GM13976 (cell line): ENCODE measurements at regions of chrX and their contacts with region 1.

Region 1: DNA sequence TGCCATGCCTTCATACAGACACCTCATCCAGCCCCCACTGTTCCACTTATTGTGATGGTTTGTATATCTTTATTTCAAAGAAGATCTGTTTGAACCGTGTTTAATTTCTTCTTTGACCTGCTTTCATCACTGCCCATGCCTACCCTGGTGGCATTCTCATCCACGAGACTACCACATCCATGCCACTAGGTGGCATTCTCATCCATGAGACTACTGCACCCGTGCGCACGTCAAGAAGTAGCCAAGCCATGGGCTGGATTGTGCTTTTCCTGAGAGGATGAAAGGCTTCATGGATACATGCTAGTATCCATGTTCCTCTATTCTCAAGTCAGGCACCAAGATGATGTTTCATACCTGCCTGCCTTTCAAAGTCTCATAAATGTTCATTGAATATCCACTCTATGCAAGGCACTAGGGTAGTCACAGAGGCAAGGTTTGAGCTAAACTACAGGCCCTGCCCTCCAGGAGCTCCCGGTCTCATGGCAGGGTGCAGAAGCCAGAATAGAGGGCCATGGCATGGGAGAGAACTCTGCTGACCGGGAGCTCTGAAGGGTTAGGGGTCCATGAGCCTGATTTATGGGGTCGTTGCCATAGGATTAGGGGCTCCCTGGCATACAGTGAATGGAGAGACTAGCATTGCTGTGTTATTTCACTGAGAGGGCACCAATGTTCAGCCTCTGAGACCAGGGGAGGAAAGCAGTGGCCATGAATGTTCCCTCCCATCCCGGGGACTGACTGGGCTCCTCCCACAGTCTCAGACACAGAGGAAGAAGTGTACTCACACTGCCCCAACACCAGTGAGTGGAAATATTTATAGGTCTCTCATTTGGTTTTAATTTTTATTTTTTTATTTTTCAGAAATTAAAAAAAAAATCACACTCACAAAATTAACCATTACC is 24.8 kb upstream of the EOLA2 start:
- DNase-seq: peak; percentile 21
- CTCF ChIP-seq: peak; percentile 53

Region 2: GRCh38 chrX:149762696-149763614 is 200.2 kb before region 1 on chrX:
- in situ Hi-C with region 1: no loop called
- DNase-seq: no peak
- CTCF ChIP-seq: no peak

Region 3: GRCh38 chrX:150486011-150486410 is 522.9 kb after region 1 on chrX:
- in situ Hi-C with region 1: loop called (anchors 25 kb)
- DNase-seq: no peak
- CTCF ChIP-seq: peak; percentile 32

Region 4: GRCh38 chrX:150693775-150694574 is 730.9 kb after region 1 on chrX:
- in situ Hi-C with region 1: loop called (anchors 25 kb)
- DNase-seq: peak; percentile 88
- CTCF ChIP-seq: no peak